PC-3 (cell line): ENCODE measurements at regions of chr4 and their contacts with region 1.

Region 1: DNA sequence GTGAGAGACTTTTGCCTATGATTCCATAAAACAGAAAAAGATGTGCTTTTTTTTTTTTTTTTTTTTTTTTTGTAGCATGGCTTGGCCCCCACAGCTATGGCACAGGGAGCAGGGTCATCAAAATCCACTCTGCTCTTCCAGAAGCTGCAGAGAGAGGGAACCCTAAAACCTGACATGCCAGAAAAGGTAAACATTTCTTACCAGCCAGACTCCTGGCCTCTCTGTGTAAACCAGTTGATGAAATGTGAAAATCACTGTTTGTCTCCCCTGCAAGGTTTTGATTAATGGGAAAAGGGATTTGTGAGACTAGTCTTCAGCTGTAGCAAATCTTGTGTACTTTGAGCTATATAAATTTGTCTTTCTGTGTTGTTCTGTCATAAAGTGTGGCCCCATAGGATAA is 105.9 kb downstream of the ARSJ start:
- DNase-seq: no peak
- ATAC-seq: no peak
- H3K4me3 ChIP-seq: no peak overlapping the region
- H3K27ac ChIP-seq: no peak overlapping the region
- H3K4me1 ChIP-seq: no peaks in the 10 kb centered on the region
- H3K27me3 ChIP-seq: no peaks in the 10 kb centered on the region
- CTCF ChIP-seq: no peak

Region 2: DNA sequence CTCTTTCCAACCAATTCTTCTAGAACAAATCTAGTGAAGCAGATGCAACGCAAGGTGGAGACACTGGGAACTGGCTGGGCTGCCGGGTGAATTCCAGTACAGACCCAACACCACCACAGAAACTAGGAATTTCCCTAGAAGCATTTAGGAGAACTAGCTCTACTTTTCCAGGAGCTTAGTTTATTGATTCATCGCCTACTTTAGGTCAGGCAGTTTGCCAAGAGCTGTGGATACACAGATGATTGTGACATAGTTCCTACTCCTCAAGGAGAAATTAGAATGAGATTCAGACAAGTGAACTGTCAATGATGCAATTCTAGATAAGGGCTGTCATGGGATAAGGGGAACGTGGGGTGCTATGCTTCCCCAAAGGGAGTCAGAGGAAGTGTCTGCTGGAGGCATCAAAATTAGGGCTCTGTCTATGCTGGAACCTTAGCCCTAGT is 462.0 kb before region 1 on chr4:
- CTCF ChIA-PET with region 1: interaction called, 10 read pairs
- POLR2A ChIA-PET with region 1: no interaction called
- intact Hi-C with region 1: no loop called
- DNase-seq: peak; percentile 68
- ATAC-seq: no peak
- H3K4me3 ChIP-seq: no peak overlapping the region
- H3K27ac ChIP-seq: no peak overlapping the region
- H3K4me1 ChIP-seq: peaks cover 21% of the 10 kb centered on the region
- H3K27me3 ChIP-seq: no peaks in the 10 kb centered on the region
- CTCF ChIP-seq: no peak

Region 3: GRCh38 chr4:113539408-113539807 is 334.1 kb before region 1 on chr4:
- CTCF ChIA-PET with region 1: no interaction called
- POLR2A ChIA-PET with region 1: no interaction called
- intact Hi-C with region 1: no loop called
- DNase-seq: peak; percentile 23
- ATAC-seq: no peak
- H3K4me3 ChIP-seq: no peak overlapping the region
- H3K27ac ChIP-seq: no peak overlapping the region
- H3K4me1 ChIP-seq: no peaks in the 10 kb centered on the region
- H3K27me3 ChIP-seq: no peaks in the 10 kb centered on the region
- CTCF ChIP-seq: no peak

Region 4: GRCh38 chr4:114132830-114133229 is 259.3 kb after region 1 on chr4:
- CTCF ChIA-PET with region 1: no interaction called
- POLR2A ChIA-PET with region 1: no interaction called
- intact Hi-C with region 1: no loop called
- DNase-seq: peak; percentile 20
- ATAC-seq: no peak
- H3K4me3 ChIP-seq: no peak overlapping the region
- H3K27ac ChIP-seq: no peak overlapping the region
- H3K4me1 ChIP-seq: no peaks in the 10 kb centered on the region
- H3K27me3 ChIP-seq: no peaks in the 10 kb centered on the region
- CTCF ChIP-seq: peak; percentile 50